ENCODE measurements at regions of chr10 and their contacts with region 1.

Region 1: GRCh38 chr10:117174439-117175214 is 22.7 kb upstream of the KCNK18 start:
- DNase-seq: peak; percentile 50 to 77
- ATAC-seq: peak; percentile 73 to 93 (median 86)
- H3K4me3 ChIP-seq: peak overlapping the region; percentile 16 to 57 (median 40)
- H3K27ac ChIP-seq: no peak overlapping the region
- H3K4me1 ChIP-seq: peaks cover 6 to 14% (median 13%) of the 10 kb centered on the region in 9 donors
- H3K27me3 ChIP-seq: peaks cover 2 to 81% (median 73%) of the 10 kb centered on the region in 7 donors
- CTCF ChIP-seq: peak; percentile 67 to 85 (median 84)

Region 2: DNA sequence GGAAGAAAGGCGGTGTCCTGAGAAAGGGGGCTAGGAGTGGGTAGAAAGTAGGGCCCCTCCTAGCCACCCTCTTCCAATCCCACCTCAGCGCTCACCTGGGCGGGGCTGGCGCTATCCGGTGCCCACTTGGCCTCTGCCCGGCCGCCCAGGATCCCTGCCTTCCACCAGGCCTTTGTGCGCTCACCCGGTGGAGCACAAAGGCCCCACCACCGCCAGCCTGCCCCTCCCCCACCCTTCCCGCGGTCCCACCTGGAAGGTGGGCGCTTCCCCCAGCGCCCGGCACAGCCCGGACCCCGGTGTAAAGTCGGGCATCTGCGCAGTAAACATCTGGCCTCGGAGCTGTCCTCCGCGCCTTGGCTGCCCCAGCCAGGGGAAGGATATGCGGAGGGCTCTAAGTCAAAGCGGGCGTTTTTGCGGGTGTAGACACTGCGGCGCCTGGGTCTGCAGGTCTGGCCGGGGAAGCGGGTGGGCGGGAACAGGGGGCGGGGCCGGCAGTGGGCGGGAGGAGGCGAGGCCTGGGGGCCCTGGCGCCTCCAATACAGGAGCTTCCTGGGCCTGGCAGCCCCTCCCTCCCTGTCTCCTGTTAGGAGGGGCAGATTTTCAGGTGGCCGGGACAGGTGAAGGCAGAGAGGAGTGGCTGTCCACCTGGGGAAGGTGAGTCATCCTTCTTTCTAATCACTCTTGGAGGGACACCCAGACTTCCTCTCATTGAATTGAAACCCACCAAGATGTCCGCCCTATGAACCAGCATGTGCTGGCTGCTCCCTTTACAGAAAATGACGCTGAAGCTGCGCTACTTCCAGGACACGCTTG is 504.6 kb before region 1 on chr10:
- intact Hi-C with region 1: loop called in 3 of 10 experiments (anchors 5 to 10 kb)
- DNase-seq: no peak
- ATAC-seq: peak in 3 of 8 donors; percentile 11 to 53 (median 21)
- H3K4me3 ChIP-seq: peak overlapping the region in 6 of 10 donors; percentile 5 to 18 (median 12)
- H3K27ac ChIP-seq: no peak overlapping the region
- H3K4me1 ChIP-seq: no peaks in the 10 kb centered on the region
- H3K27me3 ChIP-seq: peaks cover 0 to 29% (median 18%) of the 10 kb centered on the region in 7 donors
- CTCF ChIP-seq: no peak

Region 3: DNA sequence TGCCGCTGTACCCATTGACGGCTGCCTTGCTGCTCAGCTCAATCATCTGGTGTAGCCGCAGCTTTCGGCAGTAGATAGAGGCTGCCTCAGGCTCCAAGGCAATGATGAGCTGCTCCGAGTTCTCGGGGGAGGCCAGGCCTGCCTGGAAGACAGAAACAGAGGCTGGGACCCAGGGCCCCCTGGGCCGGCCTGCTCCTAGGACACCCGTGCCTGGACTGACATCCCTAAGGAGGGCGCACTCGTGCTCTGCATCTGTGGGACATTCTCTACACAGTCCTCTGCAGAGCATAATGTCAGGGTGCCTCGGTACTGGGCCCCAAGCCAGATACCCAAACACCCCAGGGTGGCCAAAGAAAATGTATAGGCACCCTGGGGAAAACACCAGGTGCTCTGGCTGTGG is 490.8 kb before region 1 on chr10:
- intact Hi-C with region 1: loop called in 8 of 10 experiments (anchors 2 to 10 kb)
- DNase-seq: no peak
- ATAC-seq: no peak
- H3K4me3 ChIP-seq: no peak overlapping the region
- H3K27ac ChIP-seq: no peak overlapping the region
- H3K4me1 ChIP-seq: peaks cover under 1 to 30% (median 19%) of the 10 kb centered on the region in 9 donors
- H3K27me3 ChIP-seq: no peaks in the 10 kb centered on the region
- CTCF ChIP-seq: no peak

Region 4: GRCh38 chr10:116690356-116691322 is 484.0 kb before region 1 on chr10:
- intact Hi-C with region 1: loop called in 2 of 10 experiments (anchors 10 kb)
- DNase-seq: peak; percentile 37 to 58
- ATAC-seq: peak; percentile 52 to 77 (median 58)
- H3K4me3 ChIP-seq: peak overlapping the region in 1 of 10 donors; percentile 11
- H3K27ac ChIP-seq: peak overlapping the region in 8 of 10 donors; percentile 5 to 72 (median 58)
- H3K4me1 ChIP-seq: peaks cover 14 to 67% (median 48%) of the 10 kb centered on the region in 9 donors
- H3K27me3 ChIP-seq: no peaks in the 10 kb centered on the region
- CTCF ChIP-seq: peak in 8 of 9 donors; percentile 13 to 67 (median 48)

Region 5: DNA sequence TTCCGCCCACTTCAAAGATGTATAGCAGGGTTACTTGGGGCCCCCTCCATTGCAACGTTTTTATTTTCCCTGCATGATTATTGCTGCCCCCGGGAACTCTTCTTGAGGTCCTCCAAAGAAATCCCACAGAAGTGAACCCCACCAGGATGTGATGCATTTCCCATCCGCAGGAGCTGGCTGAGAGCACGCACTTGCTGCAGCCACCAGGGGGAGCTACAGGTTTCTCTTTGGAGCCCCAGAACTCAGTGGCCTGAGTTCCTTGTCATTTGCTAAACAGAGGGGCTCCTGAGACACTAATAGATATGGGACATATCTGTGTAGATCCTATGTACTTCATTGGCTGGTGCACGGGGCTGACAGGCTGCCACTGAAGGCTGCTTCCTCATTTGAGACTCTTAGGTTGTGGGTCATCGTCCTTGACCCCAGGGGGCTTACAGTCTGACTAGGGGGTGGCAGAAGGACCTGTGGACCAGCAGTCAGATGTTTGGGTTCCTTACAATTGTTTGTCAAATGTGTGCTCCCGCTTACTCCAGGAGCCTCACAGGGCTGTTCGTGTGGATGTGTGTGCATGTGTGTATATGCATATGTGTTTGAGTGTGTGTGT is 377.6 kb before region 1 on chr10:
- intact Hi-C with region 1: loop called (anchors 1 to 5 kb)
- DNase-seq: peak; percentile 60 to 67
- ATAC-seq: peak; percentile 63 to 91 (median 82)
- H3K4me3 ChIP-seq: no peak overlapping the region
- H3K27ac ChIP-seq: no peak overlapping the region
- H3K4me1 ChIP-seq: no peaks in the 10 kb centered on the region
- H3K27me3 ChIP-seq: peaks cover 0 to 37% (median 12%) of the 10 kb centered on the region in 7 donors
- CTCF ChIP-seq: peak; percentile 78 to 92 (median 88)

Region 6: GRCh38 chr10:117334066-117334465 is 159.4 kb after region 1 on chr10:
- intact Hi-C with region 1: no loop called
- DNase-seq: no peak
- ATAC-seq: no peak
- H3K4me3 ChIP-seq: no peak overlapping the region
- H3K27ac ChIP-seq: no peak overlapping the region
- H3K4me1 ChIP-seq: peaks cover 0 to under 1% (median 0%) of the 10 kb centered on the region in 9 donors
- H3K27me3 ChIP-seq: no peaks in the 10 kb centered on the region
- CTCF ChIP-seq: no peak